Natural killer cell (primary cell): ENCODE measurements at regions of chr12 and their contacts with region 1.

Region 1: GRCh38 chr12:54214553-54215406 is 26.0 kb upstream of the SMUG1 start:
- DNase-seq: peak; percentile 88 to 97
- ATAC-seq: peak; percentile 93 to 98 (median 95)
- H3K4me3 ChIP-seq: peak overlapping the region; percentile 2
- H3K4me3 Mint-ChIP-seq: peak overlapping the region; percentile 78
- H3K27ac ChIP-seq: no peak overlapping the region
- H3K27ac Mint-ChIP-seq: no peak overlapping the region
- H3K4me1 ChIP-seq: peaks cover 38% of the 10 kb centered on the region
- H3K4me1 Mint-ChIP-seq: peaks cover 17 to 36% of the 10 kb centered on the region in 2 donors
- H3K27me3 ChIP-seq: no peaks in the 10 kb centered on the region
- H3K27me3 Mint-ChIP-seq: peaks cover 0 to 14% of the 10 kb centered on the region in 2 donors
- CTCF ChIP-seq: peak; percentile 100

Region 2: DNA sequence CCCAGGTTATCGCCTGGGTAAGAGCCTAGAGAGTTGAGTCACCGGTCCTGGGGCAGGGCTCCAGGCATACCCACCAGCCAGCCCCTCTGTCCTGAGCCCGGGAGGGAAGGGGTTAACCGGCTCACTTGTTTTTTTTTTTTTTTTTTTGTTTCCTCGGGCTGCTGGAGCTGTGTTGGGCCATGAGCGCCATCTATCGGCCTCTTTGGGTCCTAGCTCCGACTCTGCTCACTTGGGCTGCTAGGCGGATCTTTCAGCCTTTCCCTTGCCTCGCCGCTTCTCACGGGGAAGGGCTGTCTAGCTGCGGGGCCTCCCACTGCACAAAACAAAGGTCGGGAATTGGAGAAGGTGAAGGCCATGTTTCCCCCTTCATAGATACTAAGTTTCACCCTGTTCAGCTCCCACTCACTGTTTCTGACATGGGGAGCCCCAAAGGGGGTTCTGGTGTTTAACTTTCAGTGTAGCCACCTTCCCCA is 23.2 kb before region 1 on chr12:
- intact Hi-C with region 1: no loop called
- DNase-seq: peak; percentile 68 to 95
- ATAC-seq: peak; percentile 67 to 80 (median 70)
- H3K4me3 ChIP-seq: no peak overlapping the region
- H3K4me3 Mint-ChIP-seq: no peak overlapping the region
- H3K27ac ChIP-seq: no peak overlapping the region
- H3K27ac Mint-ChIP-seq: no peak overlapping the region
- H3K4me1 ChIP-seq: peaks cover 29% of the 10 kb centered on the region
- H3K4me1 Mint-ChIP-seq: peaks cover 11 to 34% of the 10 kb centered on the region in 2 donors
- H3K27me3 ChIP-seq: peaks cover 30% of the 10 kb centered on the region
- H3K27me3 Mint-ChIP-seq: peaks cover 28 to 39% of the 10 kb centered on the region in 2 donors
- CTCF ChIP-seq: peak; percentile 75

Region 3: GRCh38 chr12:54368709-54369583 is 154.2 kb after region 1 on chr12:
- intact Hi-C with region 1: loop called (anchors 2 kb)
- DNase-seq: peak; percentile 83 to 93
- ATAC-seq: peak; percentile 88 to 98 (median 92)
- H3K4me3 ChIP-seq: no peak overlapping the region
- H3K4me3 Mint-ChIP-seq: peak overlapping the region; percentile 86
- H3K27ac ChIP-seq: no peak overlapping the region
- H3K27ac Mint-ChIP-seq: peak overlapping the region; percentile 62 to 66
- H3K4me1 ChIP-seq: peaks cover 22% of the 10 kb centered on the region
- H3K4me1 Mint-ChIP-seq: peaks cover 23 to 29% of the 10 kb centered on the region in 2 donors
- H3K27me3 ChIP-seq: no peaks in the 10 kb centered on the region
- H3K27me3 Mint-ChIP-seq: no peaks in the 10 kb centered on the region
- CTCF ChIP-seq: peak; percentile 86